A673 (cell line): ENCODE measurements at regions of chr2 and their contacts with region 1.

Region 1: DNA sequence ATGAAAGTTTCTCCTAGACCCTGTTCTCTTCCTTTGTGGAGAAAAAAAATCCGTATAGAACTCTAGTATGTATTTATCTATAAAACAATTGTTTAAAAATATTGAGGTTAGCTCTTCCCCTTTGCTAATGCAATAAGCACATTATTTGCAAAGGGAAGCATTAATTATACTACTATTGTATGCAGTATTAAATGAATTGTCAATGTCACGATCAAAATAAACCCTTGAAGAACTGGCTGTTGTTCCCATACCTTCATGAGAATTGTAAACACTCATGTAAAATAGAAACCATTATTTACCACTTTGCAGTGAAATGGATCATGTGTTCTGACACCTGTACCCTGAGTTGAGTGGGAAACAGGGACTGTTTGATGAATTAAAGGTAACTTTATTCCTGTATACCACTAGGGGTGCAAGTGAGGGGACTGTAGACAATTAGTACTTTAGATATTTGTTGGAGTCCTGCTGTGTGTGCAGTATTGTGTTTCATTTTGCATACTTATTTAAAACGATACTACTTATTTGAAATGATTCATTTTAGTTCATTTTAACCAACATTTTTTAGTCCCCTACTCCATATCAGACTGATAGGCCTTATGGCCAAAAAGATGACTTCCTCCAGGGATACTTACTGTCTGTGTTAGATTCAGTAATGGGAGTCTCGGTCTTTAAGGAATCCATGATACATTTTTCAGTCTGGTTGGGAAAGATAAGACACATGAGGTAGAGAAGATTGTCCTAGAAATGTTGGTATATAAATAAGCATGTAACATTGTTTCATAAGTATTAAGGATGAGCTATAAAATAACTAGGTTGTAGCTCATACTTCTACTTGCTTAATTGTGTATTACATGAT is 7.9 kb downstream of the PKP4 start:
- DNase-seq: no peak
- H3K4me3 ChIP-seq: no peak overlapping the region
- H3K27ac ChIP-seq: no peak overlapping the region
- H3K4me1 ChIP-seq: peaks cover 31% of the 10 kb centered on the region
- H3K27me3 ChIP-seq: no peaks in the 10 kb centered on the region
- CTCF ChIP-seq: peak; percentile 68

Region 2: DNA sequence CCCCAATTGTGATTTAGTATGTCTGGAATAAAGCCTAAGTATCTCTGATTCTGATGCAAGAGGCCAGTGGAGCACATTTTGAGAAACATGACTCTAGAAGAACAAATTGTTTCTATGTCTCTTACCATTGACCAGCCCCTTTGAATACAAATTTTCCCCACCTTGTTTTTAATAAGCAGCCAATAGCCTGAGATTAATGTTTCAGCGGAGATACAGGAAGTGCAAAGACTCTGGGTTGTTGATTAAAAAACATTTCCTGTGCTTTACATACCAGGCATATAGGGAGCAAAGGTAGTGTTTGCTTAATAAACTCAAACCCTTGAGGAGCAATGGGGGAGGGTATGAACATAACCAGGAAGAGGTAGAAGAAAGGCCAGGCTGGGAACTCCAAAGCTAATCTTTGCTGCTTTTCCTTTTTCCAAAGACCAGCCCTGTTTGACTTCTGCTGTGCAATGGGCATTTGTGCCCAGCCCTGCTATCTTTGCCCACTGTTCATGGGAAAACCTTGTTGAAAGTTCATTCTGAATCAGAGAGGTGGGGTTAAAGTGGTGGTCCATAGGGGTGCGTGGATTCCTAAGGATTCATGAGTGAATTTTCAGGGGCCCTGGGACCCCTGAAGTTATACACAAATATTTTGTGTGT is 333.7 kb before region 1 on chr2:
- CTCF ChIA-PET with region 1: no interaction called
- POLR2A ChIA-PET with region 1: no interaction called
- intact Hi-C with region 1: no loop called
- DNase-seq: no peak
- H3K4me3 ChIP-seq: no peak overlapping the region
- H3K27ac ChIP-seq: no peak overlapping the region
- H3K4me1 ChIP-seq: no peaks in the 10 kb centered on the region
- H3K27me3 ChIP-seq: no peaks in the 10 kb centered on the region
- CTCF ChIP-seq: no peak

Region 3: DNA sequence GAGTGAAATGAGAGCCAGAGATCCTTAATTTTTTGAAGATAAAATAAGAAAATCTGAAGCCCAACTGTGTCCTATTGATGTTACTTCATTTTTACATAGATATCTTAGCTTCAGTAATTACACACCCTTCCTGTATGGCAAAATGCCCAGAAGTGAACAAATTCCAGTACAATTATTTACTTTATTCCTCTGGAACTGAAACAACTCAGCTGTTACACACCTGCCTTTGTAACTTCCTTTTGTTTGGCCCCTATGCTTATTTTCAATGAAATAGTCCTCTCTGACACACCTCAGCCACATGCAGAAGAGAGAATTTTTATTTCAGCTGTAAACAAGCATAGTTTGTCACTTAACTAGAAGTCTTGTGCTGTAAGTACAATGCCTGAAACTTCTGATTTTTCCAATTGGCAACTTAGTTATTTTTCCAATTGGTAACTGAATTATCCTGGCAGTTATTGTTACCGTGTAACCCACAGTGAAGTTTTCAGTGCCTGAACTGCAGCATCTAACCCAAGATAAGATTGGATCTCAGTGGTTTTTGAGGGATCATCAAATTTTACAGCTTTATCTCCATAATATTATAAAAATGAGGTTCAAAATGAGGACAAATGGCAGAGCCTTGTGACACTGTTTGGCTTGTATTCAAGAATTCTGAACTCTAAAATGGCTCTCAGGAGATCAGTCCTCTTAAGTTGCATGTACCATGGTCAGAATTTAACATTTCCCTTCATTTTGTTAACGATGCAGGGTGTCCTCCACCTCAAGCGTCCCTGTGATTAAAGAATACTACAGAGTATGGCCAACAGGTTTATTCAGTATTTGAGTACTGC is 74.7 kb after region 1 on chr2:
- CTCF ChIA-PET with region 1: no interaction called
- POLR2A ChIA-PET with region 1: no interaction called
- intact Hi-C with region 1: loop called (anchors 5 kb)
- DNase-seq: peak; percentile 90
- H3K4me3 ChIP-seq: no peak overlapping the region
- H3K27ac ChIP-seq: peak overlapping the region; percentile 55
- H3K4me1 ChIP-seq: peaks cover 40% of the 10 kb centered on the region
- H3K27me3 ChIP-seq: no peaks in the 10 kb centered on the region
- CTCF ChIP-seq: no peak